K562 (cell line): ENCODE measurements at regions of chr14 and their contacts with region 1.

Region 1: DNA sequence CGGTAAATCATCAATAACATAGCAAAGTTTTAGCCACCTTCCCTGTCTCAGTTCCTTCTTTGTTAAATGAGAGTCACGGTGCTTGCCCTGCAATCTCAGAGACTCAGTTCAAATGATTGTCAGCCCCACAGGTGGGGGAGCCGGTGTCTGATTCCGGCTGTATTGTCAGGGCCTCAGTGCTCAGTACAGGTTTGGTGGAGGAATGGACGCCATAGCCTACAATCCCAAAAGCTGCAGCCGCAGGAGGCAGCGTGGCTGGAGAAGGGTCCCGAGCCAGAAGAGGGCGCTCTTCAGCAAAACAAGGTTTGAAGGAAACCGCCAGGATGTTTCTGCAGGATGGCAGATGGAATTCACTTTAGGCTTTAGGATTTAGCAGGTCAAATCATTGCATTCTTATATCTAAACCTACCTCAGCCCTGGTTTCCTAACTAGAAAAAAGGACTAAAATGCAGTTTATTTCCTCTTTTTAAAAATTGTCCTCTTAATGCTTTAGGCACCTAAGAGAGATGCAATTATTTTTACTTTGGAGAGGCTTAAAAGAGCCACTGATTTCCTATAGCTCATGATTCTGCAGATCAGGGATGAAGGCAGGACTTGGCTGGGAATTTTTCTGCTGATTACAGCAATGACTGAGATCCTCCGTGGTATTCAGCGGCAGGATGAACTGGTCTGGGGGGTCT is 29.2 kb downstream of the FOS start:
- DNase-seq: peak; percentile 52 to 84 (median 58)
- ATAC-seq: peak; percentile 94
- H3K4me3 ChIP-seq: no peak overlapping the region
- H3K27ac ChIP-seq: no peak overlapping the region
- H3K4me1 ChIP-seq: no peaks in the 10 kb centered on the region; a peak in 3 of 5 replicates
- H3K27me3 ChIP-seq: peaks cover 0 to 3% of the 10 kb centered on the region in 2 experiments; a peak in 2 of 5 replicates
- CTCF ChIP-seq: peak; percentile 84 to 95 (median 89)
- EP300 ChIP-seq: 0 out of 2 replicates have a peak, but pooled peaks have one; percentile 9
- POLR2A ChIP-seq: no peak
- RAD21 ChIP-seq: peak; percentile 89 to 92

Region 2: DNA sequence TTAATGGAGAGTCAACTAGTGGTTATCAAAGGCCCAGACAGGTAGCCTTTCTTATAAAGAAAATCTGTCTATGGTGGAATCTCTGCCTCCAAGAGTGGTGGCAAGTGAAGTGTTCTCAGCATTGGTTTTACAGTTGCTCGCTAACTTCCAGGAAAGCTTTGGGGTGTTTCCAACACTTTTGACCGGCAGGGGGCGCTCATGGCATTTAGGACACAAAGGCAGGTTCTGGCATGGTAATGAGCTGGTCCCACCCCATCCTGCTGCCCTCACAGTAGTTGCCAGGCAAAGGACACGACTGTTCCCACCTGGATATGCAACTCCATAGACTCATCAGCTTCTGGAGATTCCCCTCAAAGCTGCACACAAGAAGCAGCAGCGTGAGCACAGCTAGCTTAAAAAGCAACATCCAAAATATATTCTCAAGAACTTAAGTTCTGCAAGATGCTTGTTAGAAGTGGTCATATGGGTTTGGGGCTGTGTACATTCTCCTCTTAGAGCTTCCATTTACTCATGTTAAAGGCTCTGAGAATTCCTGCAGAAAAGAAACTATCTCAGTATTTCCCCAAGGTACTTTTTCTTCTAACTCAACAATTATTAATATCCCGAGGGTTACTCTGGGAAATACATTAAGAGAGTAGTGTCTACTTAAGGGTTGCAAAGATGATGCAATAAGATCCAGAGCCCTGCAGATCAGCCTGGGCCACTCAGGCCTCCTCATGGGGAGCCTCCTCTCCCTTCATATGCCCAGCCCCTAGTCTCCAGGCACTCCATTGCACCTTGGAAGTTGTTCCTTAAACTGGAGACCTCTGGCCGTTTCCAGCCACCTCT is 446.7 kb before region 1 on chr14:
- CTCF ChIA-PET with region 1: no interaction called
- POLR2A ChIA-PET with region 1: no interaction called
- in situ Hi-C with region 1: loop called (anchors 10 kb)
- intact Hi-C with region 1: no loop called
- DNase-seq: peak; percentile 71 to 85 (median 76)
- ATAC-seq: peak; percentile 95
- H3K4me3 ChIP-seq: no peak overlapping the region
- H3K27ac ChIP-seq: no peak overlapping the region
- H3K4me1 ChIP-seq: no peaks in the 10 kb centered on the region; a peak in 1 of 5 replicates
- H3K27me3 ChIP-seq: no peaks in the 10 kb centered on the region
- CTCF ChIP-seq: peak; percentile 77 to 85 (median 81)
- EP300 ChIP-seq: no peak
- POLR2A ChIP-seq: no peak
- RAD21 ChIP-seq: peak; percentile 72 to 79

Region 3: DNA sequence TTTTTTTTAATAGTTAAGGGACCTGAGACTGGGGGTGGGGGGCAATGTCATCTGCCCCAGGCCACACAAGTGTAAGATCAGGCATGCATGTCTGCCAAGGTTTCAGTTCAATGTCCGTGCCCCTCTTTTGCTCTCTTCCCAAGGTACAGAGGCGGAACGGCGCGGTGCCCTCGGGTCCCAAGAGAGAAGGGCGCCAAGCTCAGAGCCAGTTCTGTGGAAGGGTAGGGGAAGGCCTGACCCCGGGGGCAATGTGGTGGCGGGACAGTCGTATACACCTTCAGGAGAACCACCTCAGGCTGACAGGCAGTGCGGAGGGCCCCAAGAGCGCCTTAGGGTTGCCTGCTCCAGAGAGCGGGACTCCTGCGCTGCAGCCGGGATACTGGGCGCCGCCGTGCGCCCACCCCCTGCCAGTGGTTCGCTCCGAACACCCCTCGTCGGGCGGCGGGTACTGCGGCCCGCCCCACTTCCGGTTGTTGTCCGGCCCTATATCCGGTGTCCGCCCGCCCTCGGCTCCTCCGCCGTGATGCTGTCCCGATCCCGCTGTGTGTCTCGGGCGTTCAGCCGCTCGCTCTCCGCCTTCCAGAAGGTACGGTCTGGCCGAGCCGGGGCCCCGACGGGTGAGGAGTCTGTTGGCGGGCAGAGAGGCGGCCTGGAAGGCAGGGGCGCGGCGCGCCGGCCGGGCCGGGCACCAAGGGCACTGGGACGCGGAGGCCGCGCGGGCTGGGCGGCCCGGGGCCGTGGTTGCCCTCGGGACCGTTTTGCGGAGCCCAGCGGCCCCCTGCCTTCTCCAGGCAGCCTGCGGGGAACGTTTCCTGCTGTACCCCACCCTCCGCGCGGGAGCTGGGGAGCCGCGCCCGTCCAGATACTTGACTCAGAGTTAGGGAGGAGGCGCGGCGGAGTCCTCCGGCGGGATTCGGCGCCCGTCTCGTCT is 426.1 kb before region 1 on chr14 and contains the start of gene DLST:
- CTCF ChIA-PET with region 1: no interaction called
- POLR2A ChIA-PET with region 1: no interaction called
- in situ Hi-C with region 1: no loop called
- intact Hi-C with region 1: no loop called
- DNase-seq: peak; percentile 89 to 94 (median 92)
- ATAC-seq: peak; percentile 94
- H3K4me3 ChIP-seq: peak within 1 kb of the TSS; percentile 95
- H3K27ac ChIP-seq: peak within 1 kb of the TSS; percentile 86
- H3K4me1 ChIP-seq: peaks cover 12 to 16% of the 10 kb centered on the region in 2 experiments; a peak in 4 of 5 replicates
- H3K27me3 ChIP-seq: no peaks in the 10 kb centered on the region
- CTCF ChIP-seq: no peak
- EP300 ChIP-seq: no peak
- POLR2A ChIP-seq: peak; percentile 82
- RAD21 ChIP-seq: no peak
- polyA plus RNA-seq, gene DLST: 3.0 to 9.0 TPM

Region 4: DNA sequence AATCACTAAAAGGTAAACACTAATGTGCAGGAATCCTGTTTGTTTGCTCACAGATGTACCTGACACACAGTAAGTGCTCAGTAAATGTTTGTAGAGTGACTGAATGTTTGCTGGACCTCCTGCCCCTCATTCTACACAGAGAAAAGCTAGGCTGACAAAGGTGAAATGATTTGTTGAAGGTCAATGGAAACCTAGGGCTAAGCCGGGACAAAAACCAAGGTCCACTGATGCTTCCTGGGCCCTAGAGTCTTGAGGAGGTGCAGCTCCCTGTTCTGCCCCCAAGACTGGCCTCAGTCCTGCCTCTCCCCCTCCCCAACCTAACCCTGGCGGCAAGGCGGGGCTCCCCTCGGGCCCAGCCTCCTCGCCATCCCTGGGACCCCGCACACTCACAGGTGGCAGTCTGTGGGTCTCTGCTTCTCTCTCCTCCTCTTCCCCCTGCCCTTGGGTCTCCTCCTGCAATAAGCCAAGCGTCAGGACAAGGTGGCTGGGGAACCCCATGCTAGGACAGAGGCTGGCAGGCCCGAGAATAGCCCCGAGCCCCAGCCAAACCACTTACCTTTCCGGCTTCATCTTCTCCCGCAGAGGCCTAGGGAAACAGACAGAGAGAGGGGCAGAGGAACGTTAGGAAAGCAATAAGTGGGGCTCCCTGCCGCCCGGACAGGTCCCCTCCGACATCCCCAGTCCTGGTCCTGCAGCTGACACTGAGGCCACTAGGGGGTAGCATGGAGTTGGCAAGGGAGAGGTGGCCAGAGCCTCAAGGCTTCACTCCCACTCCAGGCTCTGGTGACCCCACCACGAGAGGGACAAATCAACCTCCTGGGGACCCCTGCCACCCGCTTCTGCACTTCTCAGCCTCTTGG is 361.8 kb before region 1 on chr14:
- CTCF ChIA-PET with region 1: no interaction called
- POLR2A ChIA-PET with region 1: no interaction called
- in situ Hi-C with region 1: no loop called
- intact Hi-C with region 1: loop called (anchors 10 kb)
- DNase-seq: peak; percentile 72 to 86 (median 80)
- ATAC-seq: peak; percentile 89
- H3K4me3 ChIP-seq: no peak overlapping the region
- H3K27ac ChIP-seq: peak overlapping the region; percentile 21; the same call in 2 of the 3 replicates
- H3K4me1 ChIP-seq: peaks cover 13 to 45% of the 10 kb centered on the region in 2 experiments; a peak in 4 of 5 replicates
- H3K27me3 ChIP-seq: no peaks in the 10 kb centered on the region
- CTCF ChIP-seq: peak; percentile 81 to 91 (median 83)
- EP300 ChIP-seq: no peak
- POLR2A ChIP-seq: no peak; the same call in 1 of the 2 replicates
- RAD21 ChIP-seq: peak; percentile 64 to 76

Region 5: GRCh38 chr14:75487155-75487671 is 179.4 kb after region 1 on chr14:
- CTCF ChIA-PET with region 1: interaction called, 38 read pairs
- POLR2A ChIA-PET with region 1: no interaction called
- in situ Hi-C with region 1: no loop called
- intact Hi-C with region 1: loop called (anchors 1 kb)
- DNase-seq: no peak
- ATAC-seq: no peak
- H3K4me3 ChIP-seq: no peak overlapping the region
- H3K27ac ChIP-seq: no peak overlapping the region
- H3K4me1 ChIP-seq: peaks cover 5 to 12% of the 10 kb centered on the region in 2 experiments; a peak in 3 of 5 replicates
- H3K27me3 ChIP-seq: no peaks in the 10 kb centered on the region
- CTCF ChIP-seq: no peak
- EP300 ChIP-seq: no peak
- POLR2A ChIP-seq: no peak
- RAD21 ChIP-seq: no peak

Region 6: DNA sequence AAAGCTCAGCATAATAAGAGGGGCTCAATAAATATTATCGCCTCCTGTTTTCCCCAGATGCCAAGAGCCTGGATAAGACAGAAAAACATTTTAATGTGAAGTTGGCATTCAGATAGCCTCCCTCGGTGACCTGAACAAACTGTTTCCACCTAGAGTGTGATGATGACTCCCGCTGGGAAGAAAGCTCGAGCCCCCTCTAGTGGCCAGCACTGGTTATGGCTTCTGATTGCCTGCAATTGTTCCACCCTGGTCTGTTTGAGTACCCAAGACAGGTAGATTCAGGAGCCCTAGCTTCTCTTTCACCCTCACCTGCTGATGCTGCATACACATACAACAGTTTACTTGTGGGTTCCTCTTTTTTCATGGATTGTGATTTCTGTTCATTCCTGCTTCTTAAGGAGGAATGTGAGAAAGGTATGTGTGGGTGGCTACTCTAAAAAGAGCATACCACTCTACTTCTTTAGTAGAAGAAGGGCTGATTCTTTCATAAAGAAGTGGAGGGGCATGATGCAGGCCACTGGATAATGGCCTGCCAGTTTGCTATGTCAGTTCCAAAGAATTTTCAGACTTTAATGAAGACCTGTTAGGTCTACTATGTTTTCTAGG is 346.4 kb after region 1 on chr14:
- CTCF ChIA-PET with region 1: interaction called, 3 read pairs
- POLR2A ChIA-PET with region 1: no interaction called
- in situ Hi-C with region 1: no loop called
- intact Hi-C with region 1: loop called (anchors 10 kb)
- DNase-seq: peak; percentile 60 to 68 (median 66)
- ATAC-seq: peak; percentile 90
- H3K4me3 ChIP-seq: no peak overlapping the region
- H3K27ac ChIP-seq: no peak overlapping the region
- H3K4me1 ChIP-seq: no peaks in the 10 kb centered on the region; a peak in 1 of 5 replicates
- H3K27me3 ChIP-seq: no peaks in the 10 kb centered on the region
- CTCF ChIP-seq: peak; percentile 79 to 85 (median 83)
- EP300 ChIP-seq: no peak
- POLR2A ChIP-seq: no peak
- RAD21 ChIP-seq: peak; percentile 61 to 73

Region 7: DNA sequence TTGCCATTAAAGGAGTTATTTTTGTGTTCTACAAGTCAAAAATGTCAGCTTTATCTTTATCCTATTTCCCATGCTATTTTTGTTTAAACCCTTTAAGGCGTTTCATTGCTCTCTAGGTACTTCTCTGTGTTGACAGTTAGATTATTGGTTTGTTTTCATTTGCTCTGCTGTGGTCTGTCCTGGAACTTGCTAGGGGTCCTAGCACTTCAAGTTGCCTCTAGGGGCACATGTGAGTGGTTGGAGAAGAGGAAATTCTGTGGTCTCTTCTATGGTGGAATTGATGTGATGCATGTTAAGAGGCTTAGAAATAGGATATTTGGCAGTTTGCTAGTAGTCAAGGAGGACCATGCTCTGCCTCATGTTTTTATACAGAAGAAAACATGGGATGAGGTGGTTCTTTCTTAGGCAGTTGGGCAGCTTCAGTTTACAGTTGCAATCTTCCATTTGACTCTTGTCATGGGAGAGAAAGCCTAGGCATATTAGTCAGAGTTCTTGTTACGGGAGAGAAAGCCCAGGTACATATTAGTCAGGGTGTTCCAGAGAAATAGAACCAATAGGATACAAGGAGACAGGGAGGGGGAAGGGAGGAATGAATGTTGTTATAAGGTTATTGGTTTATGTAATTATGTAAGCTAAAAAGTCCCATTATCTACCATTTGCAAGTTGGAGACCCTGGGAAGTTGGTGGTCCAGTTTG is 367.6 kb after region 1 on chr14:
- CTCF ChIA-PET with region 1: no interaction called
- POLR2A ChIA-PET with region 1: no interaction called
- in situ Hi-C with region 1: no loop called
- intact Hi-C with region 1: no loop called
- DNase-seq: no peak
- ATAC-seq: peak; percentile 61; the same call in 2 of the 3 replicates
- H3K4me3 ChIP-seq: no peak overlapping the region
- H3K27ac ChIP-seq: no peak overlapping the region
- H3K4me1 ChIP-seq: no peaks in the 10 kb centered on the region
- H3K27me3 ChIP-seq: no peaks in the 10 kb centered on the region
- CTCF ChIP-seq: peak in 2 of 3 experiments; percentile 20 to 25; a peak in 1 of 6 replicates
- EP300 ChIP-seq: no peak
- POLR2A ChIP-seq: no peak
- RAD21 ChIP-seq: no peak